Mammary epithelial cell (primary cell): ENCODE measurements at regions of chr13 and their contacts with region 1.

Region 1: GRCh38 chr13:27379694-27380641 is 44.5 kb upstream of the GTF3A start:
- DNase-seq: peak; percentile 49
- H3K4me3 ChIP-seq: no peak overlapping the region
- H3K27ac ChIP-seq: no peak overlapping the region
- H3K4me1 ChIP-seq: no peaks in the 10 kb centered on the region
- H3K27me3 ChIP-seq: no peaks in the 10 kb centered on the region
- CTCF ChIP-seq: peak; percentile 70 to 76

Region 2: DNA sequence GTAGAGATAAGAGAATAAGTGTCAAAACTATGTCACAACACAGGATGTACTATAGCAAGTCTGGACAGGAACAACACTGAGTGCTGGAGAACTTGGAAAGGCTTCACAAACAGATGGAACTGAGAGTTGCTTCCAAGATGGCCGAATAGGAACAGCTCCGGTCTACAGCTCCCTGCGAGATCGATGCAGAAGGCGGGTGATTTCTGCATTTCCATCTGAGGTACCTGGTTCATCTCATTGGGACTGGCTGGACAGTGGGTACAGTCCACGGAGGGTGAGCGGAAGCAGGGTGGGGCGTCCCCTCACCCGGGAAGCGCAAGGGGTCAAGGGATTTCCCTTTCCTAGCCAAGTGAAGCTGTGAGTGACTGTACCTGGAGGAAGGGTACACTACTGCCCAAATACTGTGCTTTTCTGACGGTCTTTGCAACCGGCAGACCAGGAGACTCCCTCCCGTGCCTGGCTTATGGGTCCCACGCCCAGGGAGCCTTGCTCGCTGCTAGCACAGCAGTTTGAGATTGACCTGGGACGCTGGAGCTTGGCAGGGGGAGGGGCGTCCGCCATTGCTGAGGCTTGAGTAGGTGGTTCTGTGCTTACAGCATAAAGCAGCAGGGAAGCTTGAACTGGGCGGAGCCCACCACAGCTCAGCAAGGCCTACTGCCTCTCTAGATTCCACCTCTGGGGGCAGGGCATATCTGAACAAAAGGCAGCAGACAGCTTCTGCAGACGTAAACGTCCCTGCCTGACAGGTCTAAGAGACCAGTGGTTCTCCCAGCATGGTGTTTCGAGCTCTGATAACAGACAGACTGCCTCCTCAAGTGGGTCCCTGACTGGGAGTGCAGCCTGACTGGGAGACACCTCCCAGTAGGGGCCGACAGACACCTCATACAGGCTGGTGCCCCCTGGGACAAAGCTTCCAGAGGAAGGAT is 254.3 kb before region 1 on chr13:
- CTCF ChIA-PET with region 1: no interaction called
- dilution Hi-C with region 1: no loop called
- in situ Hi-C with region 1: no loop called
- intact Hi-C with region 1: no loop called
- DNase-seq: peak; percentile 35
- H3K4me3 ChIP-seq: no peak overlapping the region
- H3K27ac ChIP-seq: no peak overlapping the region
- H3K4me1 ChIP-seq: peaks cover 11% of the 10 kb centered on the region
- H3K27me3 ChIP-seq: no peaks in the 10 kb centered on the region
- CTCF ChIP-seq: no peak

Region 3: DNA sequence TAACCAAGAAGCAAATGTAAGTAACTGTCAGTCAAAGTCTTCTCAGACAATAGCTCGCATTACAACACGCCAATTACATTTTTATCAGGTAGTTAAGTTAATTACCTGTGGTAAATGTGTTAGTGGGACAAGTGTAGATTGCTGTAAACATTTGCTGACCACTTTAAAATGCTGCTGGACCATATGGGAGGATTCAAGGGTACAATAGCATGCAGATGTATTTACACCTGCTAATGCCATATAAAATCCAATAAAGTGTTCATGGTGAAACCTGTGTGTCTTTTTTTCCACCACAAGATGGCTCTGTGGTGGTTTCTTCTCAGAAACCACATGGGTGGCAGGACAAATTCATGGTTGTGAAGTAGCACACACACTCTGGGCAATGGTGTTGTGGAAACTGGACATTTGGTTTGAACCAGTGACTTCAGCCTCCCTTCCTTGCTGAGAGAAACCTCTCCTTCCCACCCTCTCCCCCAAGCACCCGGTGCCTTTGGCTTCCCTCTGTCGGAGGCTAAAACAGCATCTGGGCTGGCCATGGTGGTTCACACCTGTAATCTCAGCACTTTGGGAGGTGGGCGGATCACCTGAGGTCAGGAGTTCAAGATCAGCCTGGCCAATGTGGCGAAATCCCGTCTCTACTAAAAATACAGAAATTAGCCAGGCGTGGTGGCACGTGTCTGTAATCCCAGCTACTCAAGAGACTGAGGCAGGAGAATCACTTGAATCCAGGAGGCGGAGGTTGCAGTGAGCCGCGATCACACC is 26.4 kb after region 1 on chr13:
- CTCF ChIA-PET with region 1: no interaction called
- dilution Hi-C with region 1: no loop called
- in situ Hi-C with region 1: no loop called
- intact Hi-C with region 1: no loop called
- DNase-seq: peak; percentile 35
- H3K4me3 ChIP-seq: no peak overlapping the region
- H3K27ac ChIP-seq: no peak overlapping the region
- H3K4me1 ChIP-seq: no peaks in the 10 kb centered on the region
- H3K27me3 ChIP-seq: no peaks in the 10 kb centered on the region
- CTCF ChIP-seq: peak; percentile 46 to 68

Region 4: DNA sequence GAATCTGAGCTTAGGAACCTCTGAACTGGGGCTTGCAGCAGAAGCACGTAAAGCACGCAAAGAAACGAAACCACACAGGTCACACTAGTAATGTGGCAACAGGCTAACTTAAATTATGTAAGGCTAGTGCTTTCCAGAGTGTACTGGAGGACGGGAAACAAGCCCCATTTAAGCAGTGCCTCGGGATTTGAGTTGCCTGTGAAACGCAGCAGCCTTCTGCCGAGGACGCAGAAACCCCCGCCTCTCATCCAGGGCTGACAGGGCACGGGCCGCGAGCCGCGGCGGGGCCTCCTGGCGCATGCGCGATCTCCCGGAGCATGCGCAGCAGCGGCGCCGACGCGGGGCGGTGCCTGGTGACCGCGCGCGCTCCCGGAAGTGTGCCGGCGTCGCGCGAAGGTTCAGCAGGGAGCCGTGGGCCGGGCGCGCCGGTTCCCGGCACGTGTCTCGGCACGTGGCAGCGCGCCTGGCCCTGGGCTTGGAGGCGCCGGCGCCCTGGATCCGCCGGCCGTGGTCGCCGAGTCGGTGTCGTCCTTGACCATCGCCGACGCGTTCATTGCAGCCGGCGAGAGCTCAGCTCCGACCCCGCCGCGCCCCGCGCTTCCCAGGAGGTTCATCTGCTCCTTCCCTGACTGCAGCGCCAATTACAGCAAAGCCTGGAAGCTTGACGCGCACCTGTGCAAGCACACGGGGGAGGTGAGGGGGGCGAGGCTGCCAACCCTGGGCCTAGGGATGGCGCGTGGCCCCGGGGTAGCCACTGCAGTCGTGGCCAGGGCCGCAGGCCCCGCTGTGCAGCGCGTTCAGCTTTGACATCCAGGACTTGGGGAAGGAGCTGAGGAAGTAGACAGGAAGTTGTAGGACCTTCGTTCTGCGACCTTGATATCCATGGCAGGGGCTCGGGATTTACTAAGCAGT is 44.5 kb after region 1 on chr13 and contains the start of gene GTF3A:
- CTCF ChIA-PET with region 1: no interaction called
- dilution Hi-C with region 1: no loop called
- in situ Hi-C with region 1: no loop called
- intact Hi-C with region 1: loop called (anchors 2 kb)
- DNase-seq: peak; percentile 83
- H3K4me3 ChIP-seq: peak within 1 kb of the TSS; percentile 58 to 68 (median 62)
- H3K27ac ChIP-seq: peak within 1 kb of the TSS; percentile 64
- H3K4me1 ChIP-seq: peaks cover 33% of the 10 kb centered on the region
- H3K27me3 ChIP-seq: no peaks in the 10 kb centered on the region
- CTCF ChIP-seq: no peak
- total RNA-seq, gene GTF3A: 62.0 to 69.3 TPM

Region 5: GRCh38 chr13:27783111-27783510 is 403.1 kb after region 1 on chr13:
- CTCF ChIA-PET with region 1: no interaction called
- dilution Hi-C with region 1: no loop called
- in situ Hi-C with region 1: no loop called
- intact Hi-C with region 1: loop called (anchors 5 kb)
- DNase-seq: no peak
- H3K4me3 ChIP-seq: no peak overlapping the region
- H3K27ac ChIP-seq: no peak overlapping the region
- H3K4me1 ChIP-seq: no peaks in the 10 kb centered on the region
- H3K27me3 ChIP-seq: peaks cover 3% of the 10 kb centered on the region
- CTCF ChIP-seq: peak; percentile 12 to 68

Region 6: GRCh38 chr13:28423010-28423409 is 1043.0 kb after region 1 on chr13:
- CTCF ChIA-PET with region 1: no interaction called
- dilution Hi-C with region 1: no loop called
- in situ Hi-C with region 1: no loop called
- intact Hi-C with region 1: no loop called
- DNase-seq: no peak
- H3K4me3 ChIP-seq: no peak overlapping the region
- H3K27ac ChIP-seq: no peak overlapping the region
- H3K4me1 ChIP-seq: no peaks in the 10 kb centered on the region
- H3K27me3 ChIP-seq: no peaks in the 10 kb centered on the region
- CTCF ChIP-seq: no peak